B cell (primary cell): ENCODE measurements at regions of chr7 and their contacts with region 1.

Region 1: DNA sequence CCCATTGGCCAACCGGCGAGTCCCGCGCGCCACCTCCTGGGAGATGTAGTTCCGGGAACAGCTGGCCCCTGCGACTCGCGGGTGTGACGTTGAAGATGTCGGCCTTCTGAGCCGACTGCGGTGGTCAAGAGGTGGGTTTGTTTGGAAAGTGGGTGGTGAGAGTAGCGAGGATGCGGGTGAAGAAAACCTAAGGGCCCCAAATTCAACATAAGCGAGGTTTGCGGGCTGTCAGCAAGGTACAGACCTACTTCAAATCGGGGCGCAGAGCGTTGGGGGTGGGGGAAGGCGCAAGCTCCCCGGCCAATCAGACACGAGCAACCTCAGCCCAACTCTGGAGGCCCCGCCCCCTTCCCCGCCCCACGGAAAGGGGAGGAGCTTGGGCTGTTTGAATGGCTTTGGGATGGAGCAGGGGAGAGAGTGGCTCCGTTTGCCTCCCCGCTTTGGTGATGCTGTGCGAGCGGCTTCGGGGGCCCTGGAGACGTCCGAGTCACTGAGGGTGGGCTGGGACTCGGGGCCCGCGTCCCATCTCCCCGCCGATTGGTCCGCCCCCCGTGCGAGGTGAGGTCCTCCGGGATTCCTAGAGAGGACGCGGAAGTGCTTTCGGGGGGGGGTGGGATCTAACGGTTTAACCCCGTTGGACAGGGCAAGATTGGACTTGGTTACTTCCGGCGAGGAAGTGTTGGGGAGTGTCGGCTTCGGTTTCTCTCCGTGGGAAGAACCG is at the start of gene ZKSCAN5:
- DNase-seq: peak; percentile 99
- ATAC-seq: peak; percentile 84
- H3K4me3 ChIP-seq: peak within 1 kb of the TSS; percentile 76 to 96 (median 93)
- H3K4me3 Mint-ChIP-seq: peak within 1 kb of the TSS; percentile 96
- H3K27ac ChIP-seq: peak within 1 kb of the TSS; percentile 77 to 80
- H3K27ac Mint-ChIP-seq: peak within 1 kb of the TSS; percentile 98
- H3K4me1 ChIP-seq: peaks cover 20 to 27% of the 10 kb centered on the region in 2 donors
- H3K4me1 Mint-ChIP-seq: peaks cover 31% of the 10 kb centered on the region
- H3K27me3 ChIP-seq: no peaks in the 10 kb centered on the region
- H3K27me3 Mint-ChIP-seq: no peaks in the 10 kb centered on the region
- CTCF ChIP-seq: no peak
- total RNA-seq, gene ZKSCAN5: 10.9 and 11.7 TPM in 2 replicates

Region 2: GRCh38 chr7:99344061-99344647 is 160.6 kb before region 1 on chr7:
- CTCF ChIA-PET with region 1: no interaction called
- POLR2A ChIA-PET with region 1: no interaction called
- intact Hi-C with region 1: no loop called
- DNase-seq: no peak
- ATAC-seq: no peak
- H3K4me3 ChIP-seq: no peak overlapping the region
- H3K4me3 Mint-ChIP-seq: no peak overlapping the region
- H3K27ac ChIP-seq: no peak overlapping the region
- H3K27ac Mint-ChIP-seq: no peak overlapping the region
- H3K4me1 ChIP-seq: no peaks in the 10 kb centered on the region
- H3K4me1 Mint-ChIP-seq: no peaks in the 10 kb centered on the region
- H3K27me3 ChIP-seq: no peaks in the 10 kb centered on the region
- H3K27me3 Mint-ChIP-seq: no peaks in the 10 kb centered on the region
- CTCF ChIP-seq: no peak

Region 3: GRCh38 chr7:99438573-99439480 is 65.9 kb before region 1 on chr7 and contains the starts of genes CPSF4 and PTCD1:
- CTCF ChIA-PET with region 1: no interaction called
- POLR2A ChIA-PET with region 1: no interaction called
- intact Hi-C with region 1: loop called (anchors 1 kb)
- DNase-seq: peak; percentile 93
- ATAC-seq: peak; percentile 96
- H3K4me3 ChIP-seq: peak within 1 kb of the TSS; percentile 41 to 97 (median 92)
- H3K4me3 Mint-ChIP-seq: peak within 1 kb of the TSS; percentile 97
- H3K27ac ChIP-seq: peak within 1 kb of the TSS; percentile 59 to 79
- H3K27ac Mint-ChIP-seq: peak within 1 kb of the TSS; percentile 95
- H3K4me1 ChIP-seq: peaks cover 12 to 28% of the 10 kb centered on the region in 2 donors
- H3K4me1 Mint-ChIP-seq: peaks cover 30% of the 10 kb centered on the region
- H3K27me3 ChIP-seq: no peaks in the 10 kb centered on the region
- H3K27me3 Mint-ChIP-seq: no peaks in the 10 kb centered on the region
- CTCF ChIP-seq: no peak
- total RNA-seq, gene CPSF4: 60.0 and 63.2 TPM in 2 replicates
- total RNA-seq, gene PTCD1: 10.2 and 14.8 TPM in 2 replicates

Region 4: GRCh38 chr7:99472561-99473243 is 32.1 kb before region 1 on chr7 and contains the start of gene ZNF789:
- CTCF ChIA-PET with region 1: interaction called, 3 read pairs
- POLR2A ChIA-PET with region 1: interaction called, 6 read pairs
- intact Hi-C with region 1: loop called (anchors 1 kb)
- DNase-seq: peak; percentile 96
- ATAC-seq: peak; percentile 99
- H3K4me3 ChIP-seq: peak within 1 kb of the TSS; percentile 77 to 87 (median 83)
- H3K4me3 Mint-ChIP-seq: peak within 1 kb of the TSS; percentile 95
- H3K27ac ChIP-seq: peak within 1 kb of the TSS; percentile 59 to 82
- H3K27ac Mint-ChIP-seq: peak within 1 kb of the TSS; percentile 96
- H3K4me1 ChIP-seq: peaks cover 8 to 16% of the 10 kb centered on the region in 2 donors
- H3K4me1 Mint-ChIP-seq: peaks cover 30% of the 10 kb centered on the region
- H3K27me3 ChIP-seq: no peaks in the 10 kb centered on the region
- H3K27me3 Mint-ChIP-seq: no peaks in the 10 kb centered on the region
- CTCF ChIP-seq: peak; percentile 9
- total RNA-seq, gene ZNF789: 36.7 and 37.3 TPM in 2 replicates

Region 5: GRCh38 chr7:99558306-99559174 is 53.8 kb after region 1 on chr7 and contains the start of gene ZNF655:
- CTCF ChIA-PET with region 1: interaction called, 4 read pairs
- POLR2A ChIA-PET with region 1: interaction called, 33 read pairs
- intact Hi-C with region 1: loop called (anchors 1 kb)
- DNase-seq: peak; percentile 94
- ATAC-seq: peak; percentile 80
- H3K4me3 ChIP-seq: peak within 1 kb of the TSS; percentile 77 to 97 (median 92)
- H3K4me3 Mint-ChIP-seq: peak within 1 kb of the TSS; percentile 98
- H3K27ac ChIP-seq: peak within 1 kb of the TSS; percentile 91 to 98
- H3K27ac Mint-ChIP-seq: peak within 1 kb of the TSS; percentile 98
- H3K4me1 ChIP-seq: peaks cover 19 to 25% of the 10 kb centered on the region in 2 donors
- H3K4me1 Mint-ChIP-seq: peaks cover 42% of the 10 kb centered on the region
- H3K27me3 ChIP-seq: no peaks in the 10 kb centered on the region
- H3K27me3 Mint-ChIP-seq: no peaks in the 10 kb centered on the region
- CTCF ChIP-seq: no peak
- total RNA-seq, gene ZNF655: 150 and 154 TPM in 2 replicates

Region 6: DNA sequence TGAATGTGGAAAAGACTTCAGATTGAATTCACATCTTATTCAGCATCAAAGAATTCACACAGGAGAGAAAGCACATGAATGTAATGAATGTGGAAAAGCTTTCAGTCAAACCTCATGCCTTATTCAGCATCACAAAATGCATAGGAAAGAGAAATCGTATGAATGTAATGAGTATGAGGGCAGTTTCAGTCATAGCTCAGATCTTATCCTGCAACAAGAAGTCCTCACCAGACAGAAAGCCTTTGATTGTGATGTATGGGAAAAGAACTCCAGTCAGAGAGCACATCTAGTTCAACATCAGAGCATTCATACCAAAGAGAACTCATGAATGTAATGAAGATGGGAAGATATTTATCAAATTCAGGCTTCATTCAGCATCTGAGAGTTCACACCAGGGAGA is 68.5 kb after region 1 on chr7:
- CTCF ChIA-PET with region 1: no interaction called
- POLR2A ChIA-PET with region 1: no interaction called
- intact Hi-C with region 1: no loop called
- DNase-seq: no peak
- ATAC-seq: no peak
- H3K4me3 ChIP-seq: no peak overlapping the region
- H3K4me3 Mint-ChIP-seq: no peak overlapping the region
- H3K27ac ChIP-seq: no peak overlapping the region
- H3K27ac Mint-ChIP-seq: no peak overlapping the region
- H3K4me1 ChIP-seq: peaks cover 0 to 4% of the 10 kb centered on the region in 2 donors
- H3K4me1 Mint-ChIP-seq: peaks cover 9% of the 10 kb centered on the region
- H3K27me3 ChIP-seq: no peaks in the 10 kb centered on the region
- H3K27me3 Mint-ChIP-seq: no peaks in the 10 kb centered on the region
- CTCF ChIP-seq: no peak

Region 7: DNA sequence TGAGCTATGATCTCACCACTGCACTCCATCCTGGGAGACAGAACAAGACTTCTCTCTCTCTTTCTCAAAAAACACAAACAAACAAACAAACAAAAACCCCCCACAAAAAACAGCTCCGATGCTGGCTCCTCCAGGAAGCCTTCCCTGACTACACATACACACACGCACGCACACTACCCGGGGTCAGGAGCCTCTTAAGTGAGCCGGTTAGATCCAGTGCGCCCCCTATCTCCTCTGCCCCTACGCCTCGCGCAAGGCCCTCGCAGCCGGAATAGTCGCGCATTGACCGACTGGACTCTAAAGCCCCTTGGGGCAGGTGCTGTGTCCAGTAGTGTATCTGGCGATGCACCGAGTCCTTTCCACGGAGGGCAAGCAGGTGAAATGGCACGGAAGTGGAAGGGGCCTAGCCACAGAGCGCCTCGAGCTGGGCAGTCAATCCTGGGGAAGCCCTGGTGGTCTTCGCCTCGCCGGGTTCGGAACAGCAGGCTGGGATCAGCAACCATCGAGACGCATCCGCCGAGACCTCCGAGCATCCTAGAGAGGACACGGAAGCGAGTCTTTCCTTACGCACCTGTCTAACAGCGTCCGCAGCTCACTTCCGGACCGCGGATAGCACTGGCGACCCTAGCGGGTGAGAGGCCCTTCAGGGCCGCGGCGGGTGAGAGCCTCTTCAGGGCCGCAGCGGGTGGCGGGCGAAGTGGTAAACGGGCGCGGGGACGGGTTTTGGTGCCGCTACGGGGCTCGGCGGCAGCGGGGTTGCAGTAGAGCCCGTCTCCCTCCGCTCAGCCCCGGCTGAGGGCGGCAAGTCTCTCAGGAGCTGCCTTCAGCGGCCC is 111.8 kb after region 1 on chr7 and contains the start of gene ZSCAN25:
- CTCF ChIA-PET with region 1: interaction called, 3 read pairs
- POLR2A ChIA-PET with region 1: no interaction called
- intact Hi-C with region 1: loop called (anchors 1 kb)
- DNase-seq: peak; percentile 91
- ATAC-seq: peak; percentile 95
- H3K4me3 ChIP-seq: peak within 1 kb of the TSS; percentile 86 to 99 (median 95)
- H3K4me3 Mint-ChIP-seq: peak within 1 kb of the TSS; percentile 98
- H3K27ac ChIP-seq: peak within 1 kb of the TSS; percentile 73 to 90
- H3K27ac Mint-ChIP-seq: peak within 1 kb of the TSS; percentile 95
- H3K4me1 ChIP-seq: peaks cover 17 to 18% of the 10 kb centered on the region in 2 donors
- H3K4me1 Mint-ChIP-seq: peaks cover 28% of the 10 kb centered on the region
- H3K27me3 ChIP-seq: no peaks in the 10 kb centered on the region
- H3K27me3 Mint-ChIP-seq: no peaks in the 10 kb centered on the region
- CTCF ChIP-seq: peak; percentile 7
- total RNA-seq, gene ZSCAN25: 37.1 and 39.5 TPM in 2 replicates